Mammary epithelial cell (primary cell): ENCODE measurements at regions of chr4 and their contacts with region 1.

Region 1: DNA sequence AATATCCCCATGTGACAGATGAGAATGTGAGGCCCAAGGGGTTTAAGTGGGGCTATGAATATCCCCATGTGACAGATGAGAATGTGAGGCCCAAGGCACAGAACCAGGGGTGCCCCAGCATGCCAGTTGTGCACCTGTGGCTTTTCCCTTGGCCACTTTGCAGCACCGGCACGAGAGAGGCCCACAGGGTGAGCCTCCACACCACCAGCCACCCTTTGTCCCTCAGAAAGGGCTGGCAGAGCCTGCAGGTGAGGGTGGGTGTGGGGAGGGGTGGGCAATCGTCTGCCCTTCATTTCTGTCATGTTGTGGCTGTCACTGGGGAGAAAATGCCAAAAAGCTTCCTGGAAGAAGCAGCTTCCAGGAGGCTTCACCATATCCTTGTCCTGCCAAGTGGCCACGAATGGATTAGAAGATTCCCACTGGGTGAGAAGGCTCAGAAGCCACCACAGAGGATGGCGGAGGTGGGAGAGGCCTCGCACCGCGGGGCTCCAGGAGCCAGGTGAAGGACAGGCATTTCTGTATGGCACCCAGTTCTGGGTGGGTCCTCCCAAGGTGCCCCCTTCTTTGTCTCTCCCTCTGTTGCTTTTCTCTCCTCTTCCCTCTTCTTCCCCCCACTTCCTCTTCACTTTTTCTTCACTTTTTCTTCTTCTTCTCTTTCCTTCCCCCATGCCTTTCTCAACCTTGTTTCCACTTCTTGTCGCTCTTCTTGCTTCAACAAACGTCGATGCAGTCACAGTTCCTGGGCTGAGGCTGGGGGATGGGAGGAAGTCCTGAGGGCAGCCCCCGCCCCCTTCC is 469 bp upstream of the GPR78 start:
- DNase-seq: no peak
- H3K4me3 ChIP-seq: no peak overlapping the region
- H3K27ac ChIP-seq: no peak overlapping the region
- H3K4me1 ChIP-seq: no peaks in the 10 kb centered on the region
- H3K27me3 ChIP-seq: no peaks in the 10 kb centered on the region
- CTCF ChIP-seq: no peak

Region 2: DNA sequence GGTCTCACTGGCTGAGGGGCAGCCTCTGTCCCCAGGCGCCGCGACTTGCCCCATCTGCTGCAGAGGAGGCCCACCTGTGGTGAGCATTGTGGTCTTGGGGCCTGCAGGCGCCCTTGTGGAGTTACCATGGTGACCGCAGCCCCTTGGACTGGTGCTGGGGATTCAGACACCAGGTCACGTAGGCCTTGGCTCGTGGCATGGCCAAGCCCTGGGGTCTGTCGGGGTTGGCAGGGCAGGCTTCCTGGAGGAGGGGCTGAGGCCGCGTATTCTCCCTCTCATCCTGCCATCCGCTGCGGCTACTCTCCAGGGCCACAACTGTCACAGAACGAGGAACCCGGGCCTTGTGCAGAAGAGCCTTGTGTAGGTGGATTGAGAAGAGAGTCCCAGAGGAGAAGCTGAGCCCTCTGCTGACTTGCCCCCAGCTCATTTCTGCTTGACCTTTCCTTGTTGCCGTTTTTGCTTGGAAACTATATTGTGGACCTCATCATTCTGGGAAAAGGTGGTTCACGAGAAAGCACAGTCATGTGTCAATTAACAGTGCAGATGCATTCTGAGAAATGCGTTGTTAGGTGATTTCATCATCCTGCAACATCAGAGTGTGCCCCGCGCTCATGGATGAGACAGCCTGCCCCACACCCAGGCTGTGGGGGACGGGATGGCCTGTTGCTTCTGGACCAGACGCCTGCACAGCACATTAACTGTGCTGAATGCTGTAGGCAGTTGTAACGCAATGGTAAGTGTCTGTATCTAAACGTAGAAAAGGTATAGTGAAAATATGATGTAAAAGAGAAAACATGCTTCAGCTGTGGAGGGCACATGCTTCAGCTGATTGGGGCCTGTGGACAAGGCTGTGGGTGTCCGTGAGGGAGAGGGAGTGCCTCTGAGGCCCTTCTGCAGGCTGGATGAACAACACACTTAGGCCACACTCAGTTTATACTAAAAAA is 100.7 kb before region 1 on chr4:
- CTCF ChIA-PET with region 1: no interaction called
- dilution Hi-C with region 1: loop called (anchors 5 kb)
- in situ Hi-C with region 1: no loop called
- intact Hi-C with region 1: no loop called
- DNase-seq: no peak
- H3K4me3 ChIP-seq: no peak overlapping the region
- H3K27ac ChIP-seq: no peak overlapping the region
- H3K4me1 ChIP-seq: no peaks in the 10 kb centered on the region
- H3K27me3 ChIP-seq: no peaks in the 10 kb centered on the region
- CTCF ChIP-seq: no peak

Region 3: GRCh38 chr4:8594097-8595038 is 14.6 kb after region 1 on chr4:
- CTCF ChIA-PET with region 1: no interaction called
- dilution Hi-C with region 1: no loop called
- in situ Hi-C with region 1: no loop called
- intact Hi-C with region 1: no loop called
- DNase-seq: peak; percentile 49
- H3K4me3 ChIP-seq: no peak overlapping the region
- H3K27ac ChIP-seq: no peak overlapping the region
- H3K4me1 ChIP-seq: no peaks in the 10 kb centered on the region
- H3K27me3 ChIP-seq: peaks cover 14% of the 10 kb centered on the region
- CTCF ChIP-seq: peak; percentile 55 to 80

Region 4: DNA sequence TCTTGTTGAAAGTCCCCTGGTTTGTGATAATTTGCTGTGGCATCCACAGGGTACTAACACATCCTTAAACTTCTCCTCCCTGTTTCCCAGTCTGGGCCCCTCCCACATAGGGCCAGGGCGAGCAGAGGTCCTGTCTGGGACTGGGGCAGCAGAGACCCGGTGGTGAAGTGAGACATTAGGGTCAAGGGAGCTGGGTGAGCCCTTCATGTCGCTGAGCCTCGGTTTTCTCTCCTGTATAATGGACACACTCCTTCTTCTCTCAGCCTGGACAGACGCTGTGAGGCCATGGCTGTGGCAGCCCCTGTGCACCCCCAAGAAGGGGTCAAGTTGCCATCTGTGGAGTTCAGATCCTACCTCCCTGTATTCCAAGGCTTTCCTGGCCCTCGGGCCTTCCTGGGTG is 324.9 kb after region 1 on chr4:
- CTCF ChIA-PET with region 1: no interaction called
- dilution Hi-C with region 1: no loop called
- in situ Hi-C with region 1: no loop called
- intact Hi-C with region 1: no loop called
- DNase-seq: no peak
- H3K4me3 ChIP-seq: no peak overlapping the region
- H3K27ac ChIP-seq: no peak overlapping the region
- H3K4me1 ChIP-seq: no peaks in the 10 kb centered on the region
- H3K27me3 ChIP-seq: no peaks in the 10 kb centered on the region
- CTCF ChIP-seq: no peak